ENCODE measurements at regions of chr2 and their contacts with region 1.

Region 1: DNA sequence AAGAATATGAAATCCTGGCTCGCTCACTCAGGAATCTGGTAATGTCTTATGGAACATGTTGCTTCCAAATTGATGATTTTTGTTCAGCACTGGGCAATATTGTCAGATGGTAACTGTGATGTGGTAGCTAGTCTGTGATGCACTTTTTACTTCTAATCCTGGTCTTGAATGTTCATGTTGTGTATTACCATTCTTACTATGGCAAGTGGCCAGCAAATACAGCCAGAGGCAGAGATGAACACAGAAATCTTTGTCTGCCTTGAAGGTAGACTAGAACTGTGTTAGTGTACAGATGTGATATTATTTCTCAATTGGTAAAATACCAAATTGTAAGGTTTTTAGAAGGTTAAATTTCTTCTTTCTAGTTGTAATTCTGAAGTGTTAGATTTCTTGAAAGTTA is 83.3 kb downstream of the UBE2E3 start:
- DNase-seq: no peak
- H3K4me3 ChIP-seq: no peak overlapping the region
- H3K27ac ChIP-seq: no peak overlapping the region
- H3K4me1 ChIP-seq: no peaks in the 10 kb centered on the region
- H3K27me3 ChIP-seq: no peaks in the 10 kb centered on the region
- CTCF ChIP-seq: no peak
- POLR2A ChIP-seq: no peak

Region 2: GRCh38 chr2:180125245-180125962 is 938.3 kb before region 1 on chr2:
- intact Hi-C with region 1: loop called (anchors 5 kb)
- DNase-seq: no peak
- H3K4me3 ChIP-seq: no peak overlapping the region
- H3K27ac ChIP-seq: no peak overlapping the region
- H3K4me1 ChIP-seq: peaks cover 0 to 3% (median 0%) of the 10 kb centered on the region in 6 donors
- H3K27me3 ChIP-seq: peaks cover 0 to 7% (median 0%) of the 10 kb centered on the region in 7 donors
- CTCF ChIP-seq: peak in 5 of 11 experiments; percentile 28 to 42 (median 37)
- POLR2A ChIP-seq: no peak

Region 3: DNA sequence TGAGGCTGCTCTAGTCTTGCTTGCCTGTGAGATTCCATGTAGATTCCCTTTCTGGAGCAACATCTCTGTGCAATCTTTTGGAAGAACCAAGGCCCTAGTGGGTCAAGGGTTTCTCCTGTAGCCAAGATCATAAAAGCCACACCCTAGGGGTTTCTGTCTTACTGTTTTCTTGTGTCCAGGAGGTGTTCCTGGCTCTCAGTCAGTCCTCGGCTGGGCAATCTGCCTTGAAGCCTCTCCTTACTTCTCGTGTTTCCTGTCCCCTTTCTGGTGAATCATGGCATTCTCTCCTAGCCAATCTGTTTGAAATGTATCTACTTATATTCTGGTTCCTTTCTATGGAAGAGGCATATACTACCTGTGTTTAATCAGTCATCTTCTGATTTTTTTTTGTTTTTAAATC is 568.1 kb before region 1 on chr2:
- intact Hi-C with region 1: no loop called
- DNase-seq: no peak
- H3K4me3 ChIP-seq: no peak overlapping the region
- H3K27ac ChIP-seq: no peak overlapping the region
- H3K4me1 ChIP-seq: no peaks in the 10 kb centered on the region
- H3K27me3 ChIP-seq: no peaks in the 10 kb centered on the region
- CTCF ChIP-seq: no peak
- POLR2A ChIP-seq: no peak